ENCODE measurements at regions of chr19 and their contacts with region 1.

Region 1: GRCh38 chr19:15418588-15419412 is at the start of gene AKAP8L:
- DNase-seq: peak; percentile 93 to 100 (median 99)
- ATAC-seq: peak; percentile 90 to 92
- H3K4me3 Mint-ChIP-seq: peak within 1 kb of the TSS; percentile 90 to 100 (median 98)
- H3K27ac Mint-ChIP-seq: peak within 1 kb of the TSS; percentile 96 to 100 (median 98)
- H3K4me1 Mint-ChIP-seq: peaks cover 27 to 54% (median 48%) of the 10 kb centered on the region in 4 donors
- H3K27me3 Mint-ChIP-seq: no peaks in the 10 kb centered on the region
- polyA plus RNA-seq, gene AKAP8L: 38.7 to 80.7 (median 40.6) TPM

Region 2: GRCh38 chr19:15315101-15315500 is 103.7 kb before region 1 on chr19:
- POLR2A ChIA-PET with region 1: no interaction called
- DNase-seq: no peak
- ATAC-seq: no peak
- H3K4me3 Mint-ChIP-seq: peak overlapping the region in 9 of 10 donors; percentile 8 to 77 (median 49)
- H3K27ac Mint-ChIP-seq: peak overlapping the region in 9 of 10 donors; percentile 3 to 82 (median 65)
- H3K4me1 Mint-ChIP-seq: peaks cover 52 to 96% (median 89%) of the 10 kb centered on the region in 4 donors
- H3K27me3 Mint-ChIP-seq: no peaks in the 10 kb centered on the region

Region 3: GRCh38 chr19:15332311-15332996 is 86.3 kb before region 1 on chr19 and contains the start of gene BRD4:
- POLR2A ChIA-PET with region 1: interaction called, 11 read pairs
- DNase-seq: peak; percentile 61 to 84 (median 80)
- ATAC-seq: peak; percentile 60 to 65
- H3K4me3 Mint-ChIP-seq: peak within 1 kb of the TSS; percentile 91 to 98 (median 94)
- H3K27ac Mint-ChIP-seq: peak within 1 kb of the TSS; percentile 93 to 97 (median 94)
- H3K4me1 Mint-ChIP-seq: peaks cover 24 to 57% (median 49%) of the 10 kb centered on the region in 4 donors
- H3K27me3 Mint-ChIP-seq: no peaks in the 10 kb centered on the region
- polyA plus RNA-seq, gene BRD4: 10.6 to 37.2 (median 11.5) TPM

Region 4: DNA sequence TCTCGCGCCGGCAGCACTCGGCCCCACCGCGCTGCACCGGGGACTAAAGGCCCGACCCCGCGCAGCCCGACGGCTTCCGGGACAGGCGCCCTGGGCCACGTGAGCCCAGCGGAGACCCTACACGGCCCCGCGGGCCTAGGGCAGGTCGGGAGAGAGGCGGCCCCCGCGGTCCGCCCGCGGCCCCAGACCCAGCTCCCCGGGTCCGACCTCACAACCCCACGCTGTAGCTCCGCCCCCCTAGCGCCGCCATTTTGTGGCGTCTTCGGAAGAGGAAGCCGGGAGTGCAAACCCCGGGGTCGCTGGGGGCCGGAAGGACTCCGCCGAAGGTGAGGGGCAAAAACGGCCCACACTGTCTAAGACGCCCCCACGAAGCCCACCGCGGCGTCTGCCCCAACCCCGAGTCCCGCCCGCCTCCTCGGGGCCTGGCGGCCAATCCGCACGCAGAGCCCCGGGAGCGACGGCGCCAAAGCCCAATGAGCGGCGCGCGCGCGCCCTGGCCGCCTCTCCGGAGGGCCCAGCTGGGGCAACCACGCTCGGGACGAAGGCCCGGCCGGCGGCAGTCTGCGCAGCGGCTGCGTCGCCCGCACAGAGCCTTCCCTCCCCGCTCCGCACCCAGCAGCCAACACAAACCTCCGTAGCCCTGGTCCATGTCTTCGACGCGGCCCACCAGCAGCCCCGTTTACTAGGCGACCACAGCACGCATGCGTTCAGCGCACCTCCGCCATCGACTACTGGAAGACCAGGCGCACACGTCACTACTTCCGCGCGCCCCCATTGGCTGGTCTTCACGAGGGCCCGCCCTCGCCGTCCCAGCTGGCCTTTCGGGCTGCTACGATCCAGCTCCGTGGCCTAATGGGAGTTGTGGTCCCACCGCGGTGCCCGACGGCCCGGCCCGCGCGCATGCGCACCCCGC is 39.5 kb before region 1 on chr19 and contains the start of gene AKAP8:
- POLR2A ChIA-PET with region 1: interaction called, 110 read pairs
- DNase-seq: peak; percentile 96 to 99 (median 98)
- ATAC-seq: peak; percentile 86 to 92
- H3K4me3 Mint-ChIP-seq: peak within 1 kb of the TSS; percentile 92 to 100 (median 98)
- H3K27ac Mint-ChIP-seq: peak within 1 kb of the TSS; percentile 96 to 100 (median 100)
- H3K4me1 Mint-ChIP-seq: peaks cover 18 to 43% (median 36%) of the 10 kb centered on the region in 4 donors
- H3K27me3 Mint-ChIP-seq: no peaks in the 10 kb centered on the region
- polyA plus RNA-seq, gene AKAP8: 12.8 to 16.7 (median 14.2) TPM

Region 5: DNA sequence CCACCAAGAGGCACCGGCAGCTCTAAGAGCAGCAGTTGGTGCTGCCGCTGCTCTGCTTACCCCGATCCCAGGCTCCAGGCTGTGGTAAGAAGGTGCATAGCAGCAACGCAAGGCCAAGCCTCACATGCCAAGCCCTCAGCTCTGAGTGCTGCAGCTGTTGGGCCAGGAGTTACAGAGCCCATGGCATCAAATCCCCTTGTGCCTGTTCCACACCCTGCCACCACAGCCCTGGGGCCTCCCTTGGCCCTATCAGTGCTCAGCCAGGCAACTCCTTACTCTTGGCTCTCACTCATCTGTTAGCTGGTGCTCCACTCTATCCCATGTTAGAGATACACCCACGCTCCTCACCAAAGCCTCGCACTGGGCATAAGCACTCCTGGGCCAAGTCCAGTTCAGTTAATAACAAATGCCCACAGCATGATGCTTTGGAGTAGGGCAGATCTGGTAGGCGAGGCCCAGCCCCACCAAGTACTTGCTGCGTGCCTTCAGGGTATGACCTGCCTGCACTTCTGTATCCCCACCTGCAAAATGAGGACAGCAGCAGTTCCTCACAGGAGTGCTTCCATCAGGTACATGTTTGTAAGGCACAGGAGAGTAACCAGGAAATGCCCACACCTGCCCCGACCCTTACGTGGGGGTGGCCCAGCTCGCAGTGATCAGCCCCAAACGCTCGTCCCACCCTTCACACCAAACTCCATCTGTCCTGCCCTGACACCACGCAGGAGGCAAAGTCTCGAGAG is 16.2 kb before region 1 on chr19:
- POLR2A ChIA-PET with region 1: no interaction called
- DNase-seq: no peak
- ATAC-seq: no peak
- H3K4me3 Mint-ChIP-seq: no peak overlapping the region
- H3K27ac Mint-ChIP-seq: no peak overlapping the region
- H3K4me1 Mint-ChIP-seq: peaks cover 11 to 41% (median 29%) of the 10 kb centered on the region in 4 donors
- H3K27me3 Mint-ChIP-seq: no peaks in the 10 kb centered on the region

Region 6: GRCh38 chr19:15443838-15444237 is 25.0 kb after region 1 on chr19:
- POLR2A ChIA-PET with region 1: no interaction called
- DNase-seq: no peak
- ATAC-seq: no peak
- H3K4me3 Mint-ChIP-seq: no peak overlapping the region
- H3K27ac Mint-ChIP-seq: no peak overlapping the region
- H3K4me1 Mint-ChIP-seq: peaks cover 5 to 11% (median 7%) of the 10 kb centered on the region in 4 donors
- H3K27me3 Mint-ChIP-seq: no peaks in the 10 kb centered on the region

Region 7: GRCh38 chr19:15466851-15467733 is 48.3 kb after region 1 on chr19:
- POLR2A ChIA-PET with region 1: interaction called, 39 read pairs
- DNase-seq: peak in 2 of 10 donors; percentile 27 to 31
- ATAC-seq: peak in 1 of 2 donors; percentile 16
- H3K4me3 Mint-ChIP-seq: peak overlapping the region in 9 of 10 donors; percentile 61 to 85 (median 71)
- H3K27ac Mint-ChIP-seq: peak overlapping the region; percentile 55 to 94 (median 90)
- H3K4me1 Mint-ChIP-seq: peaks cover 36 to 74% (median 67%) of the 10 kb centered on the region in 4 donors
- H3K27me3 Mint-ChIP-seq: no peaks in the 10 kb centered on the region

Region 8: GRCh38 chr19:16180611-16181010 is 761.8 kb after region 1 on chr19:
- POLR2A ChIA-PET with region 1: no interaction called
- DNase-seq: no peak
- ATAC-seq: no peak
- H3K4me3 Mint-ChIP-seq: no peak overlapping the region
- H3K27ac Mint-ChIP-seq: no peak overlapping the region
- H3K4me1 Mint-ChIP-seq: peaks cover 6 to 14% (median 11%) of the 10 kb centered on the region in 4 donors
- H3K27me3 Mint-ChIP-seq: peaks cover 0 to 1% (median 0%) of the 10 kb centered on the region in 5 donors